K562 (cell line): ENCODE measurements at regions of chr12 and their contacts with region 1.

Region 1: DNA sequence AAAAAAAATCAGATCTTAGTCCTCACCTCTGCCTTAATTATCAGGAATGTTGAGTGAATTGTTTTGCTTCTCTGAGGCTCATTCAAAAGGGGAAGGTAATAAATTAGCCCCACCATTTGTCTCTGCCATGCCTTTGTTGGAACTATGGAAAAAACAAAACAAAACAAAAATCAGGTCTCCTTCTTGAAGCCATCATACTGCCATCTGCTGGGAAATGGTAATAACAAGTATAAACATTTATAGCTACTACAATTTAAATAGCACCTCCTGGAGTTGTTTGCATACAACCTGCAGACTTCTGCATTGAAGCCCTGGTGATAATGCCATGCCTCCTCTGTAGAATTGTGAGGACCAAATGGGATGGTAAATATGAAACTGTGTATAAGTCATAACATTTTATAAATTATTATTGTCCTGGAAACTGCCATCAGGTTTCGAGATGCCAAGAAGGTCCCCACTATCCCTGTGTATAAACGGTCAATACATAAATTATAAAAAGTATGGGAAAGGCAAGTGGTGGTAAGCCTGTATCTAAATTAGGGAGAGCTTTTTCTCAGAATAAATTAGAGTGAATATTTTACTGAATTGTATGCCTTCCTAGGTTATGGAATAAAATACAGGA is 87.2 kb upstream of the FGD4 start:
- DNase-seq: peak in 2 of 4 experiments; percentile 37 to 60
- ATAC-seq: peak; percentile 73
- H3K4me3 ChIP-seq: no peak overlapping the region
- H3K27ac ChIP-seq: no peak overlapping the region
- H3K4me1 ChIP-seq: no peaks in the 10 kb centered on the region; a peak in 1 of 5 replicates
- H3K27me3 ChIP-seq: no peaks in the 10 kb centered on the region
- CTCF ChIP-seq: peak; percentile 57 to 87 (median 85)
- EP300 ChIP-seq: no peak
- POLR2A ChIP-seq: no peak
- RAD21 ChIP-seq: peak; percentile 73

Region 2: GRCh38 chr12:31406345-31406744 is 905.8 kb before region 1 on chr12:
- CTCF ChIA-PET with region 1: no interaction called
- POLR2A ChIA-PET with region 1: no interaction called
- in situ Hi-C with region 1: loop called (anchors 10 kb)
- intact Hi-C with region 1: loop called (anchors 5 kb)
- DNase-seq: no peak
- ATAC-seq: no peak
- H3K4me3 ChIP-seq: no peak overlapping the region
- H3K27ac ChIP-seq: no peak overlapping the region
- H3K4me1 ChIP-seq: no peaks in the 10 kb centered on the region
- H3K27me3 ChIP-seq: peaks cover 0 to 5% of the 10 kb centered on the region in 2 experiments; a peak in 2 of 5 replicates
- CTCF ChIP-seq: no peak
- EP300 ChIP-seq: no peak
- POLR2A ChIP-seq: no peak
- RAD21 ChIP-seq: no peak

Region 3: GRCh38 chr12:31651893-31652521 is 660.2 kb before region 1 on chr12:
- CTCF ChIA-PET with region 1: interaction called, 9 read pairs
- POLR2A ChIA-PET with region 1: interaction called, 3 read pairs
- in situ Hi-C with region 1: loop called (anchors 5 kb)
- intact Hi-C with region 1: loop called (anchors 2 kb)
- DNase-seq: peak in 1 of 4 experiments; percentile 60
- ATAC-seq: peak; percentile 69
- H3K4me3 ChIP-seq: peak overlapping the region; percentile 23; the same call in 1 of the 2 replicates
- H3K27ac ChIP-seq: no peak overlapping the region; the same call in 2 of the 3 replicates
- H3K4me1 ChIP-seq: peaks cover 3 to 6% of the 10 kb centered on the region in 2 experiments; a peak in 3 of 5 replicates
- H3K27me3 ChIP-seq: 0 out of 5 replicates have a peak, but pooled peaks cover 0 to 2% of the 10 kb centered on the region in 2 experiments
- CTCF ChIP-seq: no peak
- EP300 ChIP-seq: no peak
- POLR2A ChIP-seq: no peak; the same call in 1 of the 2 replicates
- RAD21 ChIP-seq: no peak

Region 4: GRCh38 chr12:31959161-31959700 is 352.9 kb before region 1 on chr12 and contains the start of gene RESF1:
- CTCF ChIA-PET with region 1: interaction called, 3 read pairs
- POLR2A ChIA-PET with region 1: interaction called, 3 read pairs
- in situ Hi-C with region 1: no loop called
- intact Hi-C with region 1: loop called (anchors 5 kb)
- DNase-seq: peak; percentile 85 to 94 (median 88)
- ATAC-seq: peak; percentile 95
- H3K4me3 ChIP-seq: peak within 1 kb of the TSS; percentile 62
- H3K27ac ChIP-seq: peak within 1 kb of the TSS; percentile 90
- H3K4me1 ChIP-seq: peaks cover 17 to 21% of the 10 kb centered on the region in 2 experiments; a peak in 4 of 5 replicates
- H3K27me3 ChIP-seq: no peaks in the 10 kb centered on the region
- CTCF ChIP-seq: no peak; a peak in 1 of 6 replicates
- EP300 ChIP-seq: peak; percentile 35; the same call in 1 of the 2 replicates
- POLR2A ChIP-seq: peak; percentile 74
- RAD21 ChIP-seq: peak; percentile 39 to 51
- polyA plus RNA-seq, gene RESF1: 21.5 to 30.1 TPM